Activated CD4-positive, alpha-beta memory T cell treated with anti-CD3 and anti-CD28 coated beads for 36 hours (primary cell): ENCODE measurements at regions of chr5 and their contacts with region 1.

Region 1: GRCh38 chr5:55307383-55308253 is at the starts of genes DHX29 and MTREX:
- DNase-seq: peak; percentile 92
- H3K4me3 Mint-ChIP-seq: no peak within 1 kb of the TSS
- H3K27ac Mint-ChIP-seq: no peak within 1 kb of the TSS
- H3K4me1 Mint-ChIP-seq: peaks cover 32% of the 10 kb centered on the region
- H3K27me3 Mint-ChIP-seq: no peaks in the 10 kb centered on the region
- total RNA-seq, gene DHX29: 11.5 to 11.8 TPM
- total RNA-seq, gene MTREX: 87.4 to 96.6 TPM

Region 2: DNA sequence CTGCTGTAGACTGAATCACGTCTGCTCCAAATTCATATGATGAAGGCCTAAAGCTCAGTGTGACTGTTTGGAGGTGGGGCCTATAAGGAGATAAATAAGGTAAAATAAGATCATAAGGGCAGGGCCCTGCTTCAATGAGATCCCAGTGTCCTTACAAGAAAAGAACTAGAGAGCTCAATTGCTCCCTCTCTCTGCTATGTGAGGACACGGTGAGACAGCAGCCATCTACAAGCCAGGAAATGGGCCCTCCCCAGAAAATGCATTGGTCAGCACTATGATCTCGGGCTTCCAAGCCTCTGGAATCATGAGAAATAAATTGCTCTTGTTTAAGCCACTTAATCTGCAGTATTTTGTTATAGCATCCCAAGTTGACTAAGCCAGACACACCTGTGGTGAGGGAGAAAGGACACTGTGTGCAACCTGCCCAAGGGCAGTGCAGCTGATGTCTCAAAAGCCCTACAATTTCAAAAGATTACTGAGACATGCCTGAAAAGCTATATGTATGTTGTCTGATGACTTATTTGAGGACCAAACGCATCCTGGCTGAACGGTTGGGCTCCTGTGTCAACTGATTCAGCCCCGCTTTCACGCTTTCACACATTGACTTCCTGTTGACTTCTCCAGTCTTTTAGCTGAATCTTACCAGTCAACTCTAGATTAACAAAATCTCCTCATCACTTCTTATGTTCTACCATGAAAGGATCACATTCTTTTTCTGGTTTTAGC is 270.4 kb before region 1 on chr5:
- CTCF ChIA-PET with region 1: no interaction called
- POLR2A ChIA-PET with region 1: no interaction called
- intact Hi-C with region 1: no loop called
- DNase-seq: peak; percentile 89
- H3K4me3 Mint-ChIP-seq: peak overlapping the region; percentile 45
- H3K27ac Mint-ChIP-seq: peak overlapping the region; percentile 89
- H3K4me1 Mint-ChIP-seq: peaks cover 29% of the 10 kb centered on the region
- H3K27me3 Mint-ChIP-seq: no peaks in the 10 kb centered on the region

Region 3: GRCh38 chr5:55226027-55226933 is 81.3 kb before region 1 on chr5:
- CTCF ChIA-PET with region 1: interaction called, 4 read pairs
- POLR2A ChIA-PET with region 1: interaction called, 5 read pairs
- intact Hi-C with region 1: loop called (anchors 1 kb)
- DNase-seq: peak; percentile 82
- H3K4me3 Mint-ChIP-seq: peak overlapping the region; percentile 30
- H3K27ac Mint-ChIP-seq: no peak overlapping the region
- H3K4me1 Mint-ChIP-seq: peaks cover 30% of the 10 kb centered on the region
- H3K27me3 Mint-ChIP-seq: peaks cover 84% of the 10 kb centered on the region

Region 4: DNA sequence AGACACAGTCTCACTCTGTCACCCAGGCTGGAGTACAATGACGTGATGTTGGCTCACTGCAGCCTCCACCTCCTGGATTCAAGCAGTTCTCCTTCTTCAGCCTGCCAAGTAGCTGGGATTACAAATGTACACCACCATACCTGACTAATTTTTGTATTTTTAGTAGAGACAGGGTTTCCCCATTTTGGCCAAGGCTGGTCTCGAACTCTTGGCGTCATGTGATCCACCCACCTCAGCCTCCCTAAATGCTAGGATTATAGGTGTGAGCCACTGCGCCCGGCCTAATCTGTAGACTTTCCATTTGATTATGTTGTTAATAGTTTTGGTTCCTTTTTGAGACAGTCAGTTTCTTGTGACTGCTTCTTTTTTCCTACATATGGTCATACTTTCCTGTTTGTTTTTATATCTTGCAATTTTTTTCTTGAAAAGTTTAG is 31.2 kb after region 1 on chr5:
- CTCF ChIA-PET with region 1: interaction called, 5 read pairs
- POLR2A ChIA-PET with region 1: interaction called, 4 read pairs
- intact Hi-C with region 1: loop called (anchors 1 kb)
- DNase-seq: peak; percentile 81
- H3K4me3 Mint-ChIP-seq: no peak overlapping the region
- H3K27ac Mint-ChIP-seq: peak overlapping the region; percentile 54
- H3K4me1 Mint-ChIP-seq: peaks cover 21% of the 10 kb centered on the region
- H3K27me3 Mint-ChIP-seq: no peaks in the 10 kb centered on the region

Region 5: DNA sequence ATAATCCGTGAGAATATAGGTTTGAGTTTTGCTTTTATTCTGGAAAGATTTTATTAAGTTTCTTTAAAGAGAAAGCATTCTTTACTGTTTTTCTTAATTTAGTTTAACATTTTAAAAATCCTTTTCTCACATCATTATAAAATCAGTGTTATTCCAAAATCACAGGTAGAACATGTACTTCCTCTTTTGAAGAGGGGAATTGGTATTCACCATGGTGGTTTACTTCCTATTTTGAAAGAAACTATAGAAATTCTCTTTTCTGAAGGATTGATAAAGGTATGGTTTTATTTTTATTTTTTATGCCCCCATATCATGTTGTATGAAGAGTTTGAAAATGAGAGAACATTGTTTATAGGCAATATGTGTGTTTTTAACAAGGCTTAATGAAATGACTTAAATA is 43.1 kb after region 1 on chr5:
- CTCF ChIA-PET with region 1: no interaction called
- POLR2A ChIA-PET with region 1: no interaction called
- intact Hi-C with region 1: no loop called
- DNase-seq: no peak
- H3K4me3 Mint-ChIP-seq: no peak overlapping the region
- H3K27ac Mint-ChIP-seq: no peak overlapping the region
- H3K4me1 Mint-ChIP-seq: no peaks in the 10 kb centered on the region
- H3K27me3 Mint-ChIP-seq: no peaks in the 10 kb centered on the region